ENCODE measurements at regions of chr3 and their contacts with region 1.

Region 1: GRCh38 chr3:172039436-172040077 is at the start of gene FNDC3B:
- DNase-seq: peak; percentile 98
- H3K4me3 Mint-ChIP-seq: peak within 1 kb of the TSS; percentile 91
- H3K27ac Mint-ChIP-seq: peak within 1 kb of the TSS; percentile 98
- H3K4me1 Mint-ChIP-seq: peaks cover 59% of the 10 kb centered on the region
- H3K27me3 Mint-ChIP-seq: no peaks in the 10 kb centered on the region
- CTCF ChIP-seq: no peak
- total RNA-seq, gene FNDC3B: 345 and 453 TPM in 2 replicates

Region 2: GRCh38 chr3:171844873-171845272 is 194.7 kb before region 1 on chr3:
- CTCF ChIA-PET with region 1: interaction called, 3 read pairs
- intact Hi-C with region 1: loop called (anchors 1 kb)
- DNase-seq: no peak
- H3K4me3 Mint-ChIP-seq: no peak overlapping the region
- H3K27ac Mint-ChIP-seq: peak overlapping the region; percentile 31
- H3K4me1 Mint-ChIP-seq: peaks cover 63% of the 10 kb centered on the region
- H3K27me3 Mint-ChIP-seq: no peaks in the 10 kb centered on the region
- CTCF ChIP-seq: no peak

Region 3: GRCh38 chr3:171883257-171883892 is 156.2 kb before region 1 on chr3:
- CTCF ChIA-PET with region 1: interaction called, 6 read pairs
- intact Hi-C with region 1: loop called (anchors 2 kb)
- DNase-seq: no peak
- H3K4me3 Mint-ChIP-seq: peak overlapping the region; percentile 7
- H3K27ac Mint-ChIP-seq: peak overlapping the region; percentile 72
- H3K4me1 Mint-ChIP-seq: peaks cover 73% of the 10 kb centered on the region
- H3K27me3 Mint-ChIP-seq: no peaks in the 10 kb centered on the region
- CTCF ChIP-seq: no peak

Region 4: DNA sequence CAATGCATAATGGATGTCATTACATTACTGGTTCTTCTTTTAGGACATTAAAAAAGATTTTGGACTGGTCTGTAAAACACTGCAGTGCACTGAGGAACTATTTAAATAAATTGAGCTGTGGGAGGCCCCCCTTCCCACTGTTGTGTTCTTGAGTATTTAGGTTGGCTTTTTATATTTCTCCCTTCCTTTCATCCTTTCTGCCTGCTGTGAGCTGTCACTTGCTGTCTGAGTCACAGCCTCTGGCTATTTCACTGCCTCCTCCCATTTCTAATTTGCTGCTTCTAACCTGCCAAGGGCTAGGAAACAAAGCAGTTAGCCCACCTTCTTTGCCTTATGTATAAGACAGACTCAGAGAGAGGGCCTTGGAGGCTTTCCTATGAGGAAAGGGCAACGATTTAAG is 89.2 kb before region 1 on chr3:
- CTCF ChIA-PET with region 1: interaction called, 5 read pairs
- intact Hi-C with region 1: loop called (anchors 5 kb)
- DNase-seq: no peak
- H3K4me3 Mint-ChIP-seq: no peak overlapping the region
- H3K27ac Mint-ChIP-seq: peak overlapping the region; percentile 81
- H3K4me1 Mint-ChIP-seq: peaks cover 59% of the 10 kb centered on the region
- H3K27me3 Mint-ChIP-seq: no peaks in the 10 kb centered on the region
- CTCF ChIP-seq: no peak

Region 5: GRCh38 chr3:172061724-172062184 is 22.2 kb after region 1 on chr3:
- CTCF ChIA-PET with region 1: interaction called, 12 read pairs
- intact Hi-C with region 1: no loop called
- DNase-seq: no peak
- H3K4me3 Mint-ChIP-seq: peak overlapping the region; percentile 39
- H3K27ac Mint-ChIP-seq: peak overlapping the region; percentile 51
- H3K4me1 Mint-ChIP-seq: peaks cover 87% of the 10 kb centered on the region
- H3K27me3 Mint-ChIP-seq: no peaks in the 10 kb centered on the region
- CTCF ChIP-seq: no peak

Region 6: DNA sequence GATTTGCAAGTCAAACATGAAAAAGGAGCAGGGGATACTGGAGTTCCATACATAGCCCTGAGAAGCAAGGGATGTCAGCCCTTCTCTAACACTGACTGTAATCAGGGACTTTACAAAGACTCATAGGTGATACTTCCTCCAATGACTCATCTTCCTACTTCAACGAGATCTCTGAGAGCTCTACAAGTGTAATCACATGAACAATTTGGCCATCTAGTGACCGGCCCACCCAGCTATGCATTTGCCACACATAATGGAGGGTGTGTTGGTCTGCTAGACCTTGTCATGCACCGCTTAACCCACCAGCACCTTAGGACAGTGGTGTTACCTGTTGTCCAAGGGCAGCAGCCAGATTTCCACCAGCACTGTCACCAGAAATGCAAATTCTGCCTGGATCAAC is 596.0 kb after region 1 on chr3:
- CTCF ChIA-PET with region 1: no interaction called
- intact Hi-C with region 1: no loop called
- DNase-seq: peak; percentile 53
- H3K4me3 Mint-ChIP-seq: no peak overlapping the region
- H3K27ac Mint-ChIP-seq: peak overlapping the region; percentile 86
- H3K4me1 Mint-ChIP-seq: peaks cover 32% of the 10 kb centered on the region
- H3K27me3 Mint-ChIP-seq: no peaks in the 10 kb centered on the region
- CTCF ChIP-seq: no peak